PC-9 (cell line): ENCODE measurements at regions of chr10 and their contacts with region 1.

Region 1: DNA sequence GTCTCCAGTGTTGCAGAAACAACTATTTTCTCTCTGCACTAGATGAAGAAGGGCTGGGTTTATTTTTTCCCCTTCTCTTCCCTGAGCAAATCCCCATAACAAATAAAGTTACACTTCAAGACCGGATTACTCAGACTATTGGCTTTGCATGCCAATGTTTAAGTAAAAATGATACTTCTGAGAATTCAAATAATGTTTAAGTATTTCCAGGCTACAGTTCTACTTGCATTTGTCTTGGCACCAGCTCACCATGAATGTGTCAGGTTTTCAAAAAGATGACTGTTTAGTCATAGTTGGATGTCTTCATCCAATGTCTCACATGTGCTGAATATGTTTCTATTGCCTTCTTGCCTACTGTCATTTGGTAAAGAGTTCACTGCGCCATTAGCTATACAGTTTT is 912.6 kb downstream of the GATA3 start:
- DNase-seq: no peak
- H3K4me3 ChIP-seq: no peak overlapping the region
- H3K27ac ChIP-seq: no peak overlapping the region
- H3K4me1 ChIP-seq: peaks cover 3% of the 10 kb centered on the region
- H3K27me3 ChIP-seq: no peaks in the 10 kb centered on the region
- CTCF ChIP-seq: no peak

Region 2: DNA sequence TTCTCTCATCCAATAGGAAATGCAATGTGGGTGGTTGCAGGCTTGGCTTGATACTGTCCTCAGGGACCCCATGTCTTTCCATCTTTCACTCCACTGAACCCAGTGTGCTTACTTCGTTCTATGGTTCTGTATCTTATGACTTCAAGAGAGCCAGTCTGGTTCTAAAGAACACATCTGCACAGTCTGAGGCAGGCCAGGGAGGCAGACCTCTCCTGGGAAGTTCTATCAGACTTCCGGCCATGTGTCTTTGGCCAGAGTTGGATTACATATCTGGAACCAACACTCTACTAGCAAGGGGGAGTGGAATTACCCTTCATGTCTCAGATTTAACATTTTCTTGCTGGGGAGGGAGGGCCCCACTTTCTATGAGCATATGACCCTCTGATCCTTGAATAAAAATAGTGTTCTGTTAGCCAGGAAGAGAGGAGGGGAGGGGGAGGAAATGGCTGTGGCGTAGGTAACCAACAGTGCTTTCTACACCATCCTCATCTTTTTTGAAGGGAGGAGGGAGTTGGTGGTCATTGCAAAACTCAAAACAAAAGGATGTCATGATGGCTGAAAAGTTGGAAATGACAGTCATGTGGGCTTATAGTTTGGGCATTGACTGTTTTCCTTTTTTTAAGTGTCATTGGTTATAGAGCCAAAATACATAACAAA is 542.4 kb before region 1 on chr10:
- CTCF ChIA-PET with region 1: no interaction called
- POLR2A ChIA-PET with region 1: interaction called, 26 read pairs
- intact Hi-C with region 1: no loop called
- DNase-seq: no peak
- H3K4me3 ChIP-seq: no peak overlapping the region
- H3K27ac ChIP-seq: no peak overlapping the region
- H3K4me1 ChIP-seq: no peaks in the 10 kb centered on the region
- H3K27me3 ChIP-seq: no peaks in the 10 kb centered on the region
- CTCF ChIP-seq: no peak